ENCODE measurements at regions of chr3 and their contacts with region 1.

Region 1: DNA sequence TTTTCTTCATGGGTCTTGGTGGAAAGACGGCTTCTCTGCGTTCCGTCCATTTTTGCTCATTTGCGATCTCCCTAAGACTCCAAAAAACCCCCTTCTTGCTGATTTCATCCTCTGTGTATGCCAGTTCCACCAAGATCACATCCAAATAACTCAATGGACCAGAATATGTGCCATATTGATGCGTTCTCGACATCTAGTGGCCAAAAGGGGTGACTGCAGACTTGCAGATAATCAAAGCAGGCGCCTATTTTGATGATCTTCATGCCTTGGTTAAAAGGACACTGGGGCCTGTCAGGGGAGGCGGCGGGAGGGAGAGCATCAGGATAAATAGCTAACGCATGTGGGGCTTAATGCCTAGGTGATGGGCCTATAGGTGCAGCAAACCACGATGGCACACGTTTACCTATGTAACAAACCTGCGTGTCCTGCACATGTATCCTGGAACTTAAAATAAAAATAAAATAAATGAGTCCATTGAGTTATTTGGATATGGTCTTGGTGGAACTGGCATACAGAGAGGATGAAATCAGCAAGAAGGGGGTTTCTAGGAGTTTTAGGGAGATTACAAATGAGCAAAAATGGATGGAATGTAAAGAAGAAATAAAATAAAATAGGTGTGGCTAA is 104.2 kb upstream of the RAD18 start:
- DNase-seq: peak in 1 of 2 donors; percentile 39
- H3K4me3 ChIP-seq: no peak overlapping the region
- H3K27ac ChIP-seq: no peak overlapping the region
- H3K4me1 ChIP-seq: no peaks in the 10 kb centered on the region
- H3K27me3 ChIP-seq: peaks cover 0 to 13% of the 10 kb centered on the region in 2 donors
- CTCF ChIP-seq: peak; percentile 93 to 94

Region 2: GRCh38 chr3:8970971-8971589 is 96.4 kb before region 1 on chr3:
- intact Hi-C with region 1: loop called (anchors 5 kb)
- DNase-seq: peak in 1 of 2 donors; percentile 54
- H3K4me3 ChIP-seq: no peak overlapping the region
- H3K27ac ChIP-seq: no peak overlapping the region
- H3K4me1 ChIP-seq: peaks cover 0 to 4% (median 0%) of the 10 kb centered on the region in 4 donors
- H3K27me3 ChIP-seq: peaks cover 0 to 15% of the 10 kb centered on the region in 2 donors
- CTCF ChIP-seq: peak; percentile 97 to 99

Region 3: GRCh38 chr3:8987645-8988383 is 79.7 kb before region 1 on chr3:
- intact Hi-C with region 1: loop called (anchors 5 kb)
- DNase-seq: peak; percentile 64 to 75
- H3K4me3 ChIP-seq: no peak overlapping the region
- H3K27ac ChIP-seq: no peak overlapping the region
- H3K4me1 ChIP-seq: peaks cover 0 to 3% (median 0%) of the 10 kb centered on the region in 4 donors
- H3K27me3 ChIP-seq: peaks cover 0 to 5% of the 10 kb centered on the region in 2 donors
- CTCF ChIP-seq: peak; percentile 72 to 73

Region 4: DNA sequence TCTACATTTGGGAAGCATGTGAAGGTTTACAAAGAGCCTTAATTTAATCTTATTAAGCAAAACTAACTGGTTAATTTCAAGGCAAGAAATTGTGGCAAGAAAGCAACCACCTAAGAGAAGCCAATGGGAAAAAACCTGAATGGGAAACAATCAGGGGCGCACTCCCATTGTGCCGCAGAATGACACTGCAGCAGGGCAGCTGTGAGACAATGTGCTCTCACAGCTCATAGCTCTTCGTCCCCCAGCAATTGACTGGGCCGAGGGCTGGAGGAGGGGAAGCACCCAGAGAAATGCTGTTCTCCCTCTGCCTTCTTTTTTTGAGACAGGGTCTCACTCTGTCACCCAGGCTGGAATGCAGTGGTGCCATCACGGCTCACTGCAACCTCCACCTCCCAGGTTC is 10.9 kb before region 1 on chr3:
- intact Hi-C with region 1: no loop called
- DNase-seq: no peak
- H3K4me3 ChIP-seq: no peak overlapping the region
- H3K27ac ChIP-seq: no peak overlapping the region
- H3K4me1 ChIP-seq: no peaks in the 10 kb centered on the region
- H3K27me3 ChIP-seq: no peaks in the 10 kb centered on the region
- CTCF ChIP-seq: no peak